Activated CD4-positive, alpha-beta memory T cell treated with anti-CD3 and anti-CD28 coated beads, Interleukin-2, amount 10 ng/mL, durations not matched to agents 7 days and 5 days (primary cell): ENCODE measurements at regions of chr4 and their contacts with region 1.

Region 1: GRCh38 chr4:147707865-147708672 is 23.8 kb upstream of the ARHGAP10 start:
- DNase-seq: peak; percentile 56
- H3K4me3 Mint-ChIP-seq: no peak overlapping the region
- H3K27ac Mint-ChIP-seq: no peak overlapping the region
- H3K4me1 Mint-ChIP-seq: peaks cover 11% of the 10 kb centered on the region
- H3K27me3 Mint-ChIP-seq: peaks cover 6% of the 10 kb centered on the region

Region 2: GRCh38 chr4:147355847-147356246 is 352.2 kb before region 1 on chr4:
- CTCF ChIA-PET with region 1: no interaction called
- POLR2A ChIA-PET with region 1: no interaction called
- DNase-seq: no peak
- H3K4me3 Mint-ChIP-seq: no peak overlapping the region
- H3K27ac Mint-ChIP-seq: no peak overlapping the region
- H3K4me1 Mint-ChIP-seq: no peaks in the 10 kb centered on the region
- H3K27me3 Mint-ChIP-seq: no peaks in the 10 kb centered on the region

Region 3: DNA sequence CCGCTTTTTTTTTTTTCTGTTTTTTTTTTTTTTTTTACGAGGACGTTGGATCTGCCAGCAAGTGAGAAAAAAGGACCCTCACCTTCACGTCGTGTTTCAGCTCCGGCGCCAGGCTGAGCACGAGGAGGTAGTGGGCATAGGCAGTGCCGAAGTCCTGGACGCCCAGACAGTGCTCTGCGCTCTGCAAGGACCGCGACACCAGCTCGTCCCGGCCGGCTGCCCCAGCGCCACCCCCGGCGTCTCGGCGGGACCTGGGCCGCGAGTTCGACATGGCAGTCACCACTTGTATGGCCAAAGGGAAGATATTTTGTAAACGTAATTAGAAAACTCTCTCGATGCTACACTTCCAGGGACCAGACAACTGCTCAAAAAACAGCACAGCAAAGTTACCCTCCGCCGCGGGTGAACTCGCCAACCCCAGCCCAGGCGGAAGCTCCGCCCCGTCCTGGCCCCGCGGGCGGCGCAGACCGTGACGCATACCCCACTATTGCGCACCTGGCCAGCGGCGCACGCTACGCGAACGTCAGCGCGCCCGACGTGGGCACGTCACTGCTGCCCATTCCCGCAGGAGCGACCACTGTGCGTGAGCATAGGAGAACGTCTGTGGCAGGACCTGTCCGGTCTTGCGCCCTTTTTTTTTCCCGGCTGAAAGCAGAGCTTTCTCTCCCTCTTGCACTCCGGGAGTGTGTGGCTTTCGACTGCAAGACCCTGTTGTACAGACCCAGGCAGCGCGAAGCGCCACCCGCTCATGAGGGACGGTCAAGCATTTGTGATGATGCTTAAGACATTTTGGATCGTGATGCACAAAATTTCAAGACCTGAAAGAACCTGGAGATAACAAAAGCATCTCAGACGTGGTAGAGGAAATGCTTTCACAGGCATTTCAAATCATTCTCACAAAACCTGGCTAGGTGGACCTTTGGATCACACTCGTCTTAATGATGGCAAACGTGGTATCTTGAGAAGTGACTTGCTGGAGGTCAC is 24.1 kb before region 1 on chr4 and contains the start of gene PRMT9:
- CTCF ChIA-PET with region 1: interaction called, 10 read pairs
- POLR2A ChIA-PET with region 1: no interaction called
- DNase-seq: peak; percentile 91
- H3K4me3 Mint-ChIP-seq: peak within 1 kb of the TSS; percentile 89
- H3K27ac Mint-ChIP-seq: peak within 1 kb of the TSS; percentile 83
- H3K4me1 Mint-ChIP-seq: peaks cover 46% of the 10 kb centered on the region
- H3K27me3 Mint-ChIP-seq: peaks cover 7% of the 10 kb centered on the region
- total RNA-seq, gene PRMT9: 11.0 to 12.0 TPM

Region 4: DNA sequence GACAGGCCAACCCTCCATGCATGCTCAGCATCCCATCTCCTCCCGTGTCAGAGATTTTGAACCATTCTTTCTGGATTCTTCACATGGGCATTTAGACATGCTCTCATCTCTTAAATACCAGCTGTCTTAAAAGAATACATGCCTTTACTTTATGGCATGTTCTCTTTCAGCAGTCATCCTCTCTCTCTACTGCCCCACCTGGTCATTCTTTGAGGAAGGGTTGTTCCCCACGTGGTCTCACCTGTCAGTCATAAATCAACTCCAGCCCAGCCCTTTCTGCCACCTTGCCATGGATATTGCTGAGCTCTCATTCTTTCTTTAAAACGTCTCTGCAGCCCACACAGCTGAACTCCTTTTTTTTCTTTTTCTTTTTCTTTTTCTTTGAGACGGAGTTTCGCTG is 135.1 kb after region 1 on chr4:
- CTCF ChIA-PET with region 1: no interaction called
- POLR2A ChIA-PET with region 1: no interaction called
- DNase-seq: no peak
- H3K4me3 Mint-ChIP-seq: no peak overlapping the region
- H3K27ac Mint-ChIP-seq: no peak overlapping the region
- H3K4me1 Mint-ChIP-seq: peaks cover 2% of the 10 kb centered on the region
- H3K27me3 Mint-ChIP-seq: no peaks in the 10 kb centered on the region